Activated naive CD4-positive, alpha-beta T cell treated with anti-CD3 and anti-CD28 coated beads for 36 hours (primary cell): ENCODE measurements at regions of chr2 and their contacts with region 1.

Region 1: DNA sequence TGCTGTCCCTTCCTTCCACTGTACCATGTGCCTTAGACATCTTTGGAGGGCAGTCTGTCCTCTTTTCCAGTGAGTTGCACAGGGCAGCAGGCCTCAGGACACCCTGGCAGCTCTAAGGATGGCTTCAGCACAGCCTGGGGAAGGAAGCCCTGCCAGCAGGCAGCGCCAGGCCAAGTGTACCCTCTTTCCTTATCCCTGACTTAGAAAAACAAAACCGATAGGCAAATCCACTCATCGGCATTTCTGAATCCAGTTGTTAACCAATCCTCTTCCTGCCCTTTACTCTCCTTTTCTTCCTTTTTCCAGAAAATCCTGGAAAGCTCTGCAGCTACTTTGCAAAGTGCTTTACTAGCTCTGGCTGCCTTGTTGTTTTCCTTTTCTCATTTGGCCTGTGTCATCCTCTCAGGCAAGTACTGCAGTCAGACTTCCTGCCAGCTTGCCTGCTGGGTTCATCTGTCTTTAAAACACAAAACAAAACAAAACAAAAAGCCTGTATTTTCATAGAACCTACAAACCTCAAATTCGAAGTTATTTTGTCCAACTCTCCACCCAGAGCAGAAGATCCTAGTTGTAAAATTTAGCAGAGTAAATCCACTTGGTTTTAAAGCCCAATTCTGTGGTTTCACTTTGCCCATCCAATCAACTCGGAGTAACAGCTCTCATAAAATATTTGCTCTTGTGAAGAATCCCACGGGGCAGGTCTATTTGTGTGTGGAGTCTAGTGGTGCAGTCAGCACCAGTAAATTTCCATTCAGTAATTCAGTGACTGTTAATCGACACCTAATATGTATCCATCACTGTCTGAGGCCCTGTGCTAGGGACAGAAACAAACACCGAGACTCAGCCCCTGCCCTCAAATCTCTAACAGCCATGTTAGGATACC is 45.2 kb downstream of the PCBP1 start:
- DNase-seq: peak; percentile 63
- H3K4me3 Mint-ChIP-seq: peak overlapping the region; percentile 88
- H3K27ac Mint-ChIP-seq: peak overlapping the region; percentile 99
- H3K4me1 Mint-ChIP-seq: peaks cover 77% of the 10 kb centered on the region
- H3K27me3 Mint-ChIP-seq: no peaks in the 10 kb centered on the region

Region 2: DNA sequence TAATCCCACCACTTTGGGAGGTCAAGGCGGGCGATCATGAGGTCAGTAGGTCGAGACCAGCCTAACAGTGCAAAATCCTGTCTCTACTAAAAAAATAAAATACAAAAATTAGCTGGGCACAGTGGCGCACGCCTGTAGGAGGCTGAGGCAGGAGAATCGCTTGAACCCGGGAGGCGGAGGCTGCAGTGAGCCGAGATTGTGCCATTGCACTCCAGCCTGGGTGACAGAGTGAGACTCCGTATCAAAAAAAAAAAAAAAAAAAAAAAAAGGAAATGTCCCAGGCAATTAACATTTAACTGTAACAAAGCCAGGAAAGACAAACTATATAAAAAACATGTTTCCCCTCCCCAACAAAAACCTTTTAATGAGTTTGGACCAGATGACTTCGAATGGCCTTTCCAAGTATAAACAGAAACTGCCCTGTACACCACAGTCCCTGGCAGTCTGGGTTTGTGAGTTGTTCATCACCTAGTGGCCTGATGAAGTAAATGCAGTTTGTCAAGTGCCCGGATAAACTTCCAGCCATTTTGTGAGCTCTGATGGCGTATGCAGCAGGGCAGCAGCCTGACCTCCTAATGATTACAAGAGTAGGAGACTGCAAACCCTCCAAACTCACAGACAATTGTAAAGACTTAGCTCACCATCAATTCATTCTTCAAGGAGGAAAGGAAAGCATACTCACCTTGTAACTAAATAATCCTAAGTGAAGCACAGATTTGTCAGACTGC is 61.8 kb before region 1 on chr2:
- CTCF ChIA-PET with region 1: interaction called, 4 read pairs
- intact Hi-C with region 1: loop called (anchors 1 kb)
- DNase-seq: peak; percentile 76
- H3K4me3 Mint-ChIP-seq: peak overlapping the region; percentile 54
- H3K27ac Mint-ChIP-seq: peak overlapping the region; percentile 94
- H3K4me1 Mint-ChIP-seq: peaks cover 57% of the 10 kb centered on the region
- H3K27me3 Mint-ChIP-seq: no peaks in the 10 kb centered on the region

Region 3: GRCh38 chr2:70094978-70095719 is 37.3 kb before region 1 on chr2:
- CTCF ChIA-PET with region 1: interaction called, 13 read pairs
- intact Hi-C with region 1: loop called (anchors 2 kb)
- DNase-seq: peak; percentile 75
- H3K4me3 Mint-ChIP-seq: peak overlapping the region; percentile 77
- H3K27ac Mint-ChIP-seq: peak overlapping the region; percentile 98
- H3K4me1 Mint-ChIP-seq: peaks cover 65% of the 10 kb centered on the region
- H3K27me3 Mint-ChIP-seq: no peaks in the 10 kb centered on the region

Region 4: GRCh38 chr2:70104231-70105111 is 28.0 kb before region 1 on chr2:
- CTCF ChIA-PET with region 1: interaction called, 6 read pairs
- intact Hi-C with region 1: loop called (anchors 1 kb)
- DNase-seq: peak; percentile 81
- H3K4me3 Mint-ChIP-seq: peak overlapping the region; percentile 72
- H3K27ac Mint-ChIP-seq: peak overlapping the region; percentile 93
- H3K4me1 Mint-ChIP-seq: peaks cover 58% of the 10 kb centered on the region
- H3K27me3 Mint-ChIP-seq: no peaks in the 10 kb centered on the region